Heart right ventricle (tissue), 16 donors: ENCODE measurements at regions of chr15 and their contacts with region 1.

Region 1: GRCh38 chr15:78131295-78132061 is at the start of gene CIB2:
- DNase-seq: peak; percentile 60 to 81
- ATAC-seq: peak; percentile 86 to 95 (median 90)
- H3K4me3 ChIP-seq: peak within 1 kb of the TSS; percentile 56 to 95 (median 80)
- H3K27ac ChIP-seq: peak within 1 kb of the TSS; percentile 71 to 91 (median 84)
- H3K4me1 ChIP-seq: peaks cover 0 to 13% (median 10%) of the 10 kb centered on the region in 9 donors
- H3K27me3 ChIP-seq: no peaks in the 10 kb centered on the region
- CTCF ChIP-seq: peak; percentile 63 to 94 (median 85)
- total RNA-seq, gene CIB2: 4.0 to 32.3 (median 17.1) TPM

Region 2: DNA sequence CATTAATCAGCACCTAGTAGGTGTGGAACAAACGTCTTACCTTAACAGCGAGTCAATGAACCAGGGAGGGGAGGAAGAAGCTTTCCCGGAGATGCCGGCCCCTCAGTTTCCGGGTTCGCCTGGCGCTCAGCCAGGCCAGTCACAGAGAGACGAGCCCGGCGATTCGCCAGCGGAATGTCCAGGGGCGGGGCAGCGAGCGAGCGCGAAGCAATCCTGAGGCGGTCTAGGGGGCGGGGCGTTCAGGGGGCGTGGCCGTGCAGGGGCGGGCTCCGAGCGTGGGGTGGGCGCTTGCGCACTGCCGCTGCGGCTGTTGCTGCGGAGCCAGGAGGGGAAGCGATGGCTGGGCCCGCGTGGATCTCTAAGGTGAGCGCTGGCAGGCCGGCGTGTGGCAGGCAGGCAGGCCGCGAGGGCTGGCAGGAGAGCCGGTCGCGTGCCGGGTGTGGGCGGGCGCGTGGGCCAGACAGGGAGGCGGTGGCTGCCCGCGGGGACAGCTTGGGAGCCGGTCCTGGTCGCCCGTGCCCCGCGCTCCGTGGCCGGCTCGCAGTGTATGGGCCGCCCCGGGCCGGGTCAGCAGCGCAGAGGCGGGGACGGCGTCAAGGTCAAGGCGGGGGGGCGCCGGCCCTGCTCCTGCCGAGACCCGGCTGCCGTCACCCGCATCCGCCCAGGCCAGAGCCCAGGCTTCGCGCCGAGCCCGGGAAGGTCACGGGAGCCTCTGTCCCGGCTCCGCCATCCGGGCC is 17.8 kb after region 1 on chr15 and contains the start of gene IDH3A:
- intact Hi-C with region 1: loop called in 1 of 10 experiments (anchors 2 kb)
- DNase-seq: peak; percentile 100
- ATAC-seq: peak; percentile 97 to 99 (median 98)
- H3K4me3 ChIP-seq: peak within 1 kb of the TSS; percentile 68 to 88 (median 79)
- H3K27ac ChIP-seq: peak within 1 kb of the TSS; percentile 79 to 97 (median 92)
- H3K4me1 ChIP-seq: peaks cover 4 to 61% (median 34%) of the 10 kb centered on the region in 9 donors
- H3K27me3 ChIP-seq: no peaks in the 10 kb centered on the region
- CTCF ChIP-seq: no peak
- total RNA-seq, gene IDH3A: 315 to 509 (median 460) TPM

Region 3: GRCh38 chr15:78170848-78171773 is 39.6 kb after region 1 on chr15:
- intact Hi-C with region 1: loop called in 1 of 10 experiments (anchors 5 kb)
- DNase-seq: no peak
- ATAC-seq: peak in 7 of 8 donors; percentile 18 to 68 (median 38)
- H3K4me3 ChIP-seq: no peak overlapping the region
- H3K27ac ChIP-seq: peak overlapping the region in 7 of 10 donors; percentile 3 to 55 (median 37)
- H3K4me1 ChIP-seq: peaks cover 0 to 24% (median 12%) of the 10 kb centered on the region in 9 donors
- H3K27me3 ChIP-seq: no peaks in the 10 kb centered on the region
- CTCF ChIP-seq: no peak

Region 4: DNA sequence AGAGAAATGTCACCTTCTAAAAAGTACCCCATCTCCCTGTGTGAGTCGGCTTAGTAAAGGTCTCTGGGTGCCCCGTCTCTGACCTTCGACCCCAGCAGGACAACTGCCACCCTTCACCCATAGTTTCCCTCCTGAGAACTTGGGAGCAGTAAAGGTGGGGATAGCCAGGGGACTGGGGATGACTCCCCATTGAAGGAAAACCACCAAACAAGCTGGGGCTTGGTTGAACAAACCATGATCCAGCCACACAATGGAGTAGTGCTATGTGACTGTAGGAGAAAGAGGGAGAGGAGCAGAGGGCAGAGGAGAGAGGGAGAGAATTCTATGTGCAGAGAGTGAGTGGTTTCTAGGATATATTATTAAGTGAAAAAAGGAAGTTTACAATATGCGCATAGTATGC is 51.3 kb after region 1 on chr15:
- intact Hi-C with region 1: loop called in 1 of 10 experiments (anchors 5 kb)
- DNase-seq: no peak
- ATAC-seq: no peak
- H3K4me3 ChIP-seq: no peak overlapping the region
- H3K27ac ChIP-seq: no peak overlapping the region
- H3K4me1 ChIP-seq: no peaks in the 10 kb centered on the region
- H3K27me3 ChIP-seq: no peaks in the 10 kb centered on the region
- CTCF ChIP-seq: no peak

Region 5: DNA sequence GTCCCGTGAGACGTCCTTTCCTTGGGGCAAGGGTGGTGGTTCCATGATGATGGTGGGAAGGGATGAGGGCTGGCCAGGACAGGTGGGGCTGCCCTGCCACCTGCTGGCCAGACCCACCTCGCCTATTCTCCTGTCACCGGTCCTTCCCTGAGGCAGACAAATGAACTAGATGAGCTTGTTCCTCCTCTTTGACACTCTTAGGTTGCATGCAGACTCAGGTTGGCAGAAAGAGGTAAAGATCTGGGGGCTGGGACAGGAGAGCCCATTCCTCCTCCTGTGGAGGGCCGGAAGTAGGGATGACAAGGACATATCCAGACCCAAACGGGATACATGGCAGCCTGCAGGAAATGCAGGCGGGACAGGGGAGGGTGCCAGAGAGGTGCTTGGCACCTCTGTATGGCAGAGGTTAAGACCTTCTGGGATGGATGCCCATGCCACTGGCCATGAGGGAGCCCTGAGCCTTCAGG is 64.3 kb after region 1 on chr15:
- intact Hi-C with region 1: loop called in 2 of 10 experiments (anchors 5 to 10 kb)
- DNase-seq: peak in 1 of 2 donors; percentile 2
- ATAC-seq: peak in 5 of 8 donors; percentile 70 to 82 (median 78)
- H3K4me3 ChIP-seq: no peak overlapping the region
- H3K27ac ChIP-seq: no peak overlapping the region
- H3K4me1 ChIP-seq: no peaks in the 10 kb centered on the region
- H3K27me3 ChIP-seq: no peaks in the 10 kb centered on the region
- CTCF ChIP-seq: peak; percentile 34 to 80 (median 71)